Activated T-helper 2 cell treated with anti-CD3 and anti-CD28 coated beads, Interferon-gamma antibody, Interleukin-2, Interleukin-4, amounts not matched to agents 10 μg/mL and 5 μg/mL and 100 μg/mL, durations not matched to agents 14 hours and 24 hours and 36 hours (primary cell): ENCODE measurements at regions of chr19 and their contacts with region 1.

Region 1: DNA sequence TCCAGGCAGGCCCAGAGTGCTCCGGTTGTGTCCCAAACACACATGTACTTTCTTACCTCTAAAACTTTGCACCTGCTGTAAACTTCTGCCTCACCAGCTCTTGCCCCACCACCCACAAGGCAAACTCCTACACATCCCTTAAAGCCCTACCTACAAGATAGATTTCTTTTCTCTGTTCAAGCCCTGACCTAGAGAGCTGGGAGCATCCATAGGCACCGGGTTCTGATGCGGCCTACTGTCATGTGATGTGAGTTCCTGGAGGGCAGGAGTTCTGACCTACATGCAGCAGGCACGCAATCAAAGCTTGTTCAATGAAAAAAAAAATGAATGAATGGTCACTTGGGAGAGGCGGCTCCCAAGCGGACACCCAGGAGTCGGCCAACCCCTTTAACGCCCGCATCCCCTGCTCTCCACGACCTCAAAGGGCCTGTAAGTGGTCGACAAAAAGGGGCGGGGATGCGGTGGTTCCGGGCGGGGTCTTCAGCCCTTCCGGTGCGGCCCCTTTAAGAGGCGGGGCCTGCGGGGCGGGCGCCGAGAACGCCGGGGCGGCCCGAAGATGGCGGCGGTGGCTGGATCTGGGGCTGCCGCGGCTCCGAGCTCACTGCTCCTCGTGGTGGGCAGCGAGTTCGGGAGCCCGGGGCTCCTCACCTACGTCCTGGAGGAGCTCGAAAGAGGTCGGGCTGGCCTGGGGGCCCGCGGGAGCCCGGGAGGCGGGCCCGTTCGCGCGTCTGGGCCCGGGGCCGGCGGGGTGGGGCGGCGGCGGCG is at the start of gene MAP1S:
- DNase-seq: peak; percentile 59
- H3K4me3 Mint-ChIP-seq: peak within 1 kb of the TSS; percentile 92
- H3K27ac Mint-ChIP-seq: peak within 1 kb of the TSS; percentile 72
- H3K4me1 Mint-ChIP-seq: peaks cover 36% of the 10 kb centered on the region
- H3K27me3 Mint-ChIP-seq: no peaks in the 10 kb centered on the region
- total RNA-seq, gene MAP1S: 66.7 and 80.3 TPM in 2 replicates

Region 2: GRCh38 chr19:17687857-17688784 is 31.0 kb before region 1 on chr19 and contains the start of gene UNC13A:
- intact Hi-C with region 1: no loop called
- DNase-seq: peak; percentile 35
- H3K4me3 Mint-ChIP-seq: no peak within 1 kb of the TSS
- H3K27ac Mint-ChIP-seq: no peak within 1 kb of the TSS
- H3K4me1 Mint-ChIP-seq: peaks cover 6% of the 10 kb centered on the region
- H3K27me3 Mint-ChIP-seq: peaks cover 44% of the 10 kb centered on the region
- total RNA-seq, gene UNC13A: 0.02 TPM in 1 of 2 replicates, not detected in the other

Region 3: DNA sequence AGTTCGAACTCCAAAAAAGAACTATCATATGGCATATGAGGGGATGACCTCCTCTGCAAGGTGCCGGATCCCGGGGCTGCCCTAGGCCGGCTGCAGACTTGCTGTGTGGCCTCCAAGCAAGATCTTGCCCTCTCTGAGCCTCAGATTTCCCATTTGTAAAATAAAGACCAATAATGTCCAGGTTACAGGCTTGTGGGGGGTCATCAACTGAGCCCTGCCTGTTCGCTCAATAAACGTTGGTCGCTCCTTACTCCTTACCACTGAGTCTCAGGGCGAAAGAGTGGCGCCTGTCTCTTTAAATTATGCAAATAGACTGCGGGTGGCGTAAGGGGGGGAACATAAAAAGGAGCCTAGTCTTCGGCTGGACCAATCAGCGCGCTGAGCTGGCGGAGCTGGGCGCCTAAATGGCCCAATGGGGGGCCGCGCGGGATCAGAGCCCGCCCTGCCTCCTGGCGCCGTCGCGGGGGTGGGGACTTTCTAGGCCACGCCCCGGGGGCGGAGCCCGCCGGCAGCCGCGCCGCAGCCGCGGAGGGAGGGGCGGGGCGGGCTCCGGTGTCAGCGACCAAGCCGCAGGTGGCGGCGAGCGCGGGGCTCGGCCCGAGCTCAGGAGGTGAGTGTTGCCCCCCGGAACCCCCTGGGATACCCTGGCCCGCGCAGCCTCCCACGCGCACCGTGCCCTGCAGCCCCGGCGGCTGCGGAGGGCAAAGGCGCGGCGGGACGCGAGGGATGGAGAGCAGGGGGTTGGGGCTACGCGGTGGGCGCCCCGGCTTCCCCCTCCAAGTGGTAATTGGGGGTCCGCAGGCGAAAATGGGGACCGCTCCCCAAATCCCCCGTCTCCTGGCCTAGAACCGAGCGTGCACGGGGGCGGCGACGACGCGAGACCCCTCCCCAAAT is 28.3 kb after region 1 on chr19:
- intact Hi-C with region 1: loop called (anchors 1 kb)
- DNase-seq: peak; percentile 93
- H3K4me3 Mint-ChIP-seq: peak overlapping the region; percentile 88
- H3K27ac Mint-ChIP-seq: peak overlapping the region; percentile 82
- H3K4me1 Mint-ChIP-seq: peaks cover 34% of the 10 kb centered on the region
- H3K27me3 Mint-ChIP-seq: no peaks in the 10 kb centered on the region

Region 4: GRCh38 chr19:17775245-17775916 is 56.3 kb after region 1 on chr19:
- intact Hi-C with region 1: loop called (anchors 5 kb)
- DNase-seq: no peak
- H3K4me3 Mint-ChIP-seq: no peak overlapping the region
- H3K27ac Mint-ChIP-seq: no peak overlapping the region
- H3K4me1 Mint-ChIP-seq: peaks cover 12% of the 10 kb centered on the region
- H3K27me3 Mint-ChIP-seq: no peaks in the 10 kb centered on the region